Activated CD8-positive, alpha-beta T cell treated with anti-CD3 and anti-CD28 coated beads, Interleukin-2, amount 10 ng/mL, durations not matched to agents 7 days and 5 days (primary cell): ENCODE measurements at regions of chr10 and their contacts with region 1.

Region 1: DNA sequence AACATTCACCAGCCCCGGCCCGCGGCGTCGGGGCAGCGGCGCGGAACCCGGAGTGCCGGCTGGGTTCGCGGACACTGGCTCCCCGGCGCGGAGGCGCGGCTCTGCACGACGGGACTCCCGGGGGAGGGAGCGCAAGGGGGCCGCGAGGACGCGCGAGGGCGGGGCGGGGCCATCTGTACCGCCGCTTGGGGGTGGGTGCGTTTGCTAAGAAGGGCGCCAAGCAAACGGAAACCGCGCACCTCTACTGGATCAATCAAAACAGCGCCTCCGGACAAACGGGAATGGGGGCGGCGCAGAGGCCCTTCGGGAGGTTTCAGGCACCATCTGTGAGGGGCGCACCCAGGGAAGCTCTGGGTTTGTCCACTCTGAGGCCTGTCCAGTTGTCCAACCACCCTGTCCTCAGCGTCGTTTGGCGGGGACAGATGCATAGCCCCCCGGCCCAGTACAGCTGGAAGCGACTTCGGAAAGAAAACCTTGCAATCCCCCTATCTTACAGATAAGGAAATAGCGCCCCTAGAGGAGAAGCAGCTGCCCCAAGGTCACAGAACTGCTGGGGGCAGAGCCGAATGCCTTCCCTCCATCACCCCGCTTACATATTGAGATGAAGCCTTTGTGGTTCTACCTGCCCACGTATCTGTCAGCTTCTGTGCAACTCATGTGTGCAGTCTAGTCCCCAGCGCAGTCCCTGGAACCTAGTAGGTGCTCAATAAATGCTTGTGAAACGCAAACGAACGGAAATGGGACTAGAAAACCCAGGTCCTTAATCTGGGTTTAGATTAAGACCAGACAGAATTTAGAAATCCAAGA is 10.7 kb upstream of the SLIT1 start:
- DNase-seq: peak; percentile 77
- ATAC-seq: peak; percentile 90
- H3K4me3 Mint-ChIP-seq: peak overlapping the region; percentile 72
- H3K27ac Mint-ChIP-seq: no peak overlapping the region
- H3K4me1 Mint-ChIP-seq: peaks cover 25% of the 10 kb centered on the region
- H3K27me3 Mint-ChIP-seq: peaks cover 40% of the 10 kb centered on the region

Region 2: DNA sequence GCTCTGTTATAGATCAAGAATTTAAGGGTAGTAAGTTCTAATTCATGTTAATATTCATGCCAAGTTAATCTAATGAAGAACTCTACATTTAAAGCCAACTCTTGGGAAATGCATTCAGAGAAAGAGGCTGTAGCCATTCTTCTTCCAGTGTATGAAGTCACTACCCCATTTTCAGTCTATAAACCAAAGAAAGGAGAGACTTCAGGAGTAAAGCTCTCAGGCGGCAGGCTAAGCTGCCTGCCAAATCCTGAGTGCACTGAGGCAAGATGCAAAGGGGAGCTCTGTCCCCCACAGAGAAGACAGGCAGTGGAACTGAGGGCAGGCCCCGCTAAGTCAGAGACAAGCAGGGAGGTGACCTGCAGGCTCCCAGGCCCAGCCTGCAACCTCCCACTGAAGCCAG is 52.1 kb before region 1 on chr10:
- CTCF ChIA-PET with region 1: no interaction called
- POLR2A ChIA-PET with region 1: no interaction called
- DNase-seq: no peak
- ATAC-seq: no peak
- H3K4me3 Mint-ChIP-seq: no peak overlapping the region
- H3K27ac Mint-ChIP-seq: no peak overlapping the region
- H3K4me1 Mint-ChIP-seq: no peaks in the 10 kb centered on the region
- H3K27me3 Mint-ChIP-seq: peaks cover 22% of the 10 kb centered on the region

Region 3: GRCh38 chr10:97157578-97158095 is 38.8 kb before region 1 on chr10:
- CTCF ChIA-PET with region 1: interaction called, 11 read pairs
- POLR2A ChIA-PET with region 1: no interaction called
- DNase-seq: no peak
- ATAC-seq: no peak
- H3K4me3 Mint-ChIP-seq: no peak overlapping the region
- H3K27ac Mint-ChIP-seq: no peak overlapping the region
- H3K4me1 Mint-ChIP-seq: no peaks in the 10 kb centered on the region
- H3K27me3 Mint-ChIP-seq: peaks cover 4% of the 10 kb centered on the region

Region 4: GRCh38 chr10:97179731-97180362 is 16.6 kb before region 1 on chr10:
- CTCF ChIA-PET with region 1: interaction called, 11 read pairs
- POLR2A ChIA-PET with region 1: interaction called, 3 read pairs
- DNase-seq: no peak
- ATAC-seq: no peak
- H3K4me3 Mint-ChIP-seq: no peak overlapping the region
- H3K27ac Mint-ChIP-seq: no peak overlapping the region
- H3K4me1 Mint-ChIP-seq: peaks cover 2% of the 10 kb centered on the region
- H3K27me3 Mint-ChIP-seq: peaks cover 44% of the 10 kb centered on the region